Posterior vena cava (tissue), 2 donors: ENCODE measurements at regions of chr18 and their contacts with region 1.

Region 1: GRCh38 chr18:54561706-54562267 is 29.3 kb upstream of the DYNAP start:
- DNase-seq: no peak

Region 2: GRCh38 chr18:53004798-53005197 is 1557.0 kb before region 1 on chr18:
- intact Hi-C with region 1: no loop called
- DNase-seq: no peak

Region 3: GRCh38 chr18:54580202-54580729 is 18.5 kb after region 1 on chr18:
- intact Hi-C with region 1: loop called in 1 of 2 experiments (anchors 2 kb)
- DNase-seq: no peak